Endothelial cell of umbilical vein (primary cell): ENCODE measurements at regions of chr7 and their contacts with region 1.

Region 1: DNA sequence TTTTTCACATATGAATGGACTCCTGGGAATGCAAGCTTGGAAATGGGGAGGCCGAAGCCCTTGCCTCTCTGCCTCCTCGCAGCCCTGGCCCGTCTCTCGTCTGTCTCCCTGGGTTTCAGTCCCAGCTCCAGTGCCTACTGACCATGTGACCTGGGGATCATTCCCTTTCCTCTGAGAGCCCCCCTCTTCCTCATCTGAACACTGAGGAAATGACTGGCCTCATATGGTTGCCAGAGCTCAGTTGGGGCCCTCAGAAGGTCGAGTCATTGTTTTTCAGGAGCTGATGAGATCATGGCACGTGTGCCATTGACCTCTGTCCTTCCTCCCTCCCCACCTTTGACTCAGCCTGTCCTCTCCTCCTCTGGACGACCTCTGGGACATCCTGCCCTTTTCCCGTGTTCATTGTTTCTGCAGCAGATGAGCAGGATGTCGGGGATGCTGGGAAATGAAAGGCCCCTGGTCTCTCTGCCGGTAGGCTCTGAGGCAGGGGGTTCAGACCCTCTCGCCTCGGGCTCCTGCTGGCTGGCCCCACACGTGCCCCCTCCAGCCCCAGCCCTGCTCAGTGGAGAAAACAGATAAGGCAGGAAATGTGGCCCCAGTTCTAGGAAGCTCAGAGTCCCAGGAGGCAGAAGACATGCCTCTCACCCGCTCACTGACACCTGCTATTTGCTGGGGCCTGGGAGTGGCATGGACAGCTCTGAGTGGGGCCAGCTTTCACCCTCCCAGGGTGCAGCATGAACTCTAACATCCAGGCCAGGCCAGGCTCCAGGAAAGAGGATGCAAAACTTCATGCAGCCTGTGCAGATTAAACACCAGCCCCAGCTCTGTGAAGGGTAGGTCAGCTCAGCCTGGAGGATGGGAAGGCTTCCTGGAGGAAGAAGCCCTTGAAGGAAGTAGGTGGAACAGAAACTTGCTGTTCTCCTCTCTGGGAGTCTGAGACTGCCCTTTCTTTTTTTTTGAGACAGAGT is 8.3 kb upstream of the PPP1R35 start:
- DNase-seq: peak; percentile 96
- H3K4me3 ChIP-seq: no peak overlapping the region
- H3K27ac ChIP-seq: peak overlapping the region; percentile 85
- H3K4me1 ChIP-seq: peaks cover 35% of the 10 kb centered on the region
- H3K27me3 ChIP-seq: no peaks in the 10 kb centered on the region
- CTCF ChIP-seq: no peak
- POLR2A ChIP-seq: peak; percentile 86

Region 2: DNA sequence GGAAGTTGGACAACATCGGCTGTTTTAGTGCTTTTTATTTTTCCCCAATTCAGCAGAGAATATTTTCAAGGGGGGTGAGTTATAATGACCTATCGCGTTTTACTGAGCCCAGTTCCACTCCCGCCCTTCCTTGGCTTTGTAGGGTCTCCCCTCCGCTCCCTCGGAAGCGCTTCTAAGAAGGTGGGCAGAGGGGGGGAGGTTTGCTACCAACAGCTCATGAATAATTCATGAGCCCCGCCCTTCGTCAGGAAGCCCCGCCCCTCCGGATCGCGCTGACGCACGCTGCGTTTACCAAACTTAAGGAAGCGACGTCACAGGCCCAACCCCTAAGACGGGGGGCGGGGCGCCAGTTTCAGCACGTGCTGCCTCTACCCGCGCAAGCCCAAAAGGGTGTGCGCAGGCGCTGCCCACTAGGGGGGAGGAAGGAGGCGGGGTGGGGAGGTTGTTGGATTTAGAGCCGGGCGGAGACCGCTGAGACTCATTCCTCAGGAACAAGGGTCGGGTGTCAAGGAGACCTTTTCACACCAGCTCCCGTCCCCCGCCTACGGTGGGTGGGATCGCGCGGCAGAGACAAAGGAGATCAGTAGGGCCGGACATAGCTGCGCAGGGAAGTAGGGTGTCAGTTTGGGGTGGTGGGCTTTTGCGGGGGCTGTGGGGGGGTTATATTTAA is 15.5 kb before region 1 on chr7:
- CTCF ChIA-PET with region 1: interaction called, 10 read pairs
- POLR2A ChIA-PET with region 1: interaction called, 59 read pairs
- dilution Hi-C with region 1: no loop called
- intact Hi-C with region 1: loop called (anchors 1 kb)
- DNase-seq: peak; percentile 100
- H3K4me3 ChIP-seq: peak overlapping the region; percentile 55 to 80 (median 69)
- H3K27ac ChIP-seq: peak overlapping the region; percentile 89
- H3K4me1 ChIP-seq: peaks cover 19% of the 10 kb centered on the region
- H3K27me3 ChIP-seq: no peaks in the 10 kb centered on the region
- CTCF ChIP-seq: no peak
- POLR2A ChIP-seq: peak; percentile 92

Region 3: GRCh38 chr7:100456558-100456957 is 12.0 kb after region 1 on chr7:
- CTCF ChIA-PET with region 1: interaction called, 16 read pairs
- POLR2A ChIA-PET with region 1: interaction called, 11 read pairs
- dilution Hi-C with region 1: no loop called
- intact Hi-C with region 1: no loop called
- DNase-seq: no peak
- H3K4me3 ChIP-seq: no peak overlapping the region
- H3K27ac ChIP-seq: no peak overlapping the region
- H3K4me1 ChIP-seq: peaks cover 10% of the 10 kb centered on the region
- H3K27me3 ChIP-seq: no peaks in the 10 kb centered on the region
- CTCF ChIP-seq: no peak
- POLR2A ChIP-seq: no peak

Region 4: GRCh38 chr7:100469227-100470044 is 24.8 kb after region 1 on chr7:
- CTCF ChIA-PET with region 1: interaction called, 13 read pairs
- POLR2A ChIA-PET with region 1: interaction called, 3 read pairs
- dilution Hi-C with region 1: no loop called
- intact Hi-C with region 1: no loop called
- DNase-seq: peak; percentile 66
- H3K4me3 ChIP-seq: no peak overlapping the region
- H3K27ac ChIP-seq: no peak overlapping the region
- H3K4me1 ChIP-seq: peaks cover 8% of the 10 kb centered on the region
- H3K27me3 ChIP-seq: no peaks in the 10 kb centered on the region
- CTCF ChIP-seq: peak; percentile 89 to 100
- POLR2A ChIP-seq: peak; percentile 52